ENCODE measurements at regions of chr3 and their contacts with region 1.

Region 1: GRCh38 chr3:150495563-150496168 is 50.6 kb downstream of the SERP1 start:
- DNase-seq: no peak
- H3K4me3 ChIP-seq: no peak overlapping the region
- H3K27ac ChIP-seq: no peak overlapping the region
- H3K4me1 ChIP-seq: no peaks in the 10 kb centered on the region
- H3K27me3 ChIP-seq: peaks cover 0 to 1% (median 0%) of the 10 kb centered on the region in 4 experiments; a peak in 1 of 7 replicates
- CTCF ChIP-seq: peak in 2 of 3 experiments; percentile 44 to 54; a peak in 2 of 4 replicates
- EP300 ChIP-seq: no peak
- POLR2A ChIP-seq: no peak
- RAD21 ChIP-seq: peak; percentile 75 to 80

Region 2: DNA sequence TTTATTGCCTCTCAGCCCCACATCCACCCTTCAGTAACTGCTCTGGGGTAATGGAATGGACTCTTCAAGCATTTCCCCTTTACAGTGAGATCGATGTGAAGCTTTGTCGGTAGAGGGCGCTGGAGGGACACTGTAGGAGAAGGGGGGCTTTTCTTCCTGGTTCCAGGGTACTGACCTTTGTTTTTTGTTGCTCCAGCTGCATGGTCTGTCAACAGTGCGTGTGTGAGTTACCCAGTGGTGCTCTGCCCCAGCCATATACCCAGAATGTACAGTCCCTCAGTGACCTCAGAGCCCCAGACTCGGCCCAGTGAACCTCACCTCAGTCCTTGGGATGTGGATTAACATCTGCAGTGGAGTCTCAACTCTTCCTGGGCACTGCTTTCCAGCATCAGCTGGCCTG is 267.8 kb before region 1 on chr3:
- CTCF ChIA-PET with region 1: interaction called, 48 read pairs
- POLR2A ChIA-PET with region 1: interaction called, 3 read pairs
- DNase-seq: peak; percentile 51 to 91
- H3K4me3 ChIP-seq: no peak overlapping the region
- H3K27ac ChIP-seq: 0 out of 2 replicates have a peak overlapping the region, but pooled peaks have one; percentile 16
- H3K4me1 ChIP-seq: peaks cover 0 to 3% (median 1%) of the 10 kb centered on the region in 4 experiments; a peak in 4 of 7 replicates
- H3K27me3 ChIP-seq: no peaks in the 10 kb centered on the region; a peak in 1 of 7 replicates
- CTCF ChIP-seq: peak; percentile 70 to 97 (median 80)
- EP300 ChIP-seq: no peak
- POLR2A ChIP-seq: no peak
- RAD21 ChIP-seq: peak; percentile 90 to 91

Region 3: DNA sequence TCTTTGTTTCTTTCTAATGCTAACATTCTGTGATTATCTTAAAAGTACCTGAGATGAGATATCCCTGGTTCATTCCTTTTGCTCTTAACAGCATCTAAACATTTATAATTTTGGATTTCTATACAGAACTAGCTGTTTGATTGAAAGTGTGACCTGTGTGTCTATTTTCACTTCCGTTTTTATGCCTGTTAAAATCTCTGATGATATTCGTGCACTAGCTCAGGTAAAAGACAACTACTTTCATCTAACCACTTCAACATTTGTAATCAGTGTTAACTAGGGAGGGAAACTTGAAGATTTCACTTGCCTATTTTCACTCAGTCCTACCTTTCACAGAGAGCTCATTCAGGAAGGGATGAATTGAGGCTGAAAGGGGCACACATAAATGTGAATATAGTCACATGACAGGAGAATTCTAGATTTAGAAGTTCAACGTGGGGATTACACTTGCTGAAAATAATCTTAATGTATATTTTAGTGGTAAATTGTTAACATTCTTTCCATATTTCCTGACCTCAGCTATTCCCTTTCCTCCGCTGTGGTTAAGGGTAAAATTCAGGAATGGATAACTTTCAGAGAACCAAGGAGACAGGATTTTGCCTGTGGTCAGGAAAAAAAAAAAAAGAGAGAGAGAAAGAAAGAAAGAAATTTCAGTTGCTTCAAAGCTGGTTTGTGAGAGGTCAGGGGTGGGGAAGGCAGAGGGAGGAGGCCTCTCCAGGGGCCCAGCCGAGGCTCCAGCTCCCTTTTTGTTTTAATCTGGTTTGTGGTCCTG is 247.4 kb before region 1 on chr3:
- CTCF ChIA-PET with region 1: interaction called, 18 read pairs
- POLR2A ChIA-PET with region 1: no interaction called
- DNase-seq: no peak
- H3K4me3 ChIP-seq: no peak overlapping the region
- H3K27ac ChIP-seq: no peak overlapping the region
- H3K4me1 ChIP-seq: no peaks in the 10 kb centered on the region; a peak in 1 of 7 replicates
- H3K27me3 ChIP-seq: no peaks in the 10 kb centered on the region
- CTCF ChIP-seq: no peak
- EP300 ChIP-seq: no peak
- POLR2A ChIP-seq: no peak
- RAD21 ChIP-seq: no peak

Region 4: GRCh38 chr3:150293401-150294061 is 202.1 kb before region 1 on chr3:
- CTCF ChIA-PET with region 1: interaction called, 12 read pairs
- POLR2A ChIA-PET with region 1: no interaction called
- DNase-seq: no peak
- H3K4me3 ChIP-seq: no peak overlapping the region
- H3K27ac ChIP-seq: no peak overlapping the region
- H3K4me1 ChIP-seq: peaks cover 0 to 5% (median 3%) of the 10 kb centered on the region in 4 experiments; a peak in 3 of 7 replicates
- H3K27me3 ChIP-seq: no peaks in the 10 kb centered on the region
- CTCF ChIP-seq: no peak
- EP300 ChIP-seq: no peak
- POLR2A ChIP-seq: no peak
- RAD21 ChIP-seq: no peak

Region 5: GRCh38 chr3:150483226-150483625 is 12.4 kb before region 1 on chr3:
- CTCF ChIA-PET with region 1: interaction called, 20 read pairs
- POLR2A ChIA-PET with region 1: interaction called, 3 read pairs
- DNase-seq: no peak
- H3K4me3 ChIP-seq: no peak overlapping the region
- H3K27ac ChIP-seq: no peak overlapping the region
- H3K4me1 ChIP-seq: no peaks in the 10 kb centered on the region
- H3K27me3 ChIP-seq: no peaks in the 10 kb centered on the region
- CTCF ChIP-seq: no peak
- EP300 ChIP-seq: no peak
- POLR2A ChIP-seq: no peak
- RAD21 ChIP-seq: no peak